Activated T-helper 1 cell treated with anti-CD3 and anti-CD28 coated beads, Interleukin-12 subunit alpha, Interleukin-12 subunit beta, Interleukin-2, Interleukin-4 antibody, amounts not matched to agents 30 ng/mL and 10 ng/mL and 1 ng/mL, durations not matched to agents 14 hours and 24 hours and 36 hours (primary cell): ENCODE measurements at regions of chr19 and their contacts with region 1.

Region 1: DNA sequence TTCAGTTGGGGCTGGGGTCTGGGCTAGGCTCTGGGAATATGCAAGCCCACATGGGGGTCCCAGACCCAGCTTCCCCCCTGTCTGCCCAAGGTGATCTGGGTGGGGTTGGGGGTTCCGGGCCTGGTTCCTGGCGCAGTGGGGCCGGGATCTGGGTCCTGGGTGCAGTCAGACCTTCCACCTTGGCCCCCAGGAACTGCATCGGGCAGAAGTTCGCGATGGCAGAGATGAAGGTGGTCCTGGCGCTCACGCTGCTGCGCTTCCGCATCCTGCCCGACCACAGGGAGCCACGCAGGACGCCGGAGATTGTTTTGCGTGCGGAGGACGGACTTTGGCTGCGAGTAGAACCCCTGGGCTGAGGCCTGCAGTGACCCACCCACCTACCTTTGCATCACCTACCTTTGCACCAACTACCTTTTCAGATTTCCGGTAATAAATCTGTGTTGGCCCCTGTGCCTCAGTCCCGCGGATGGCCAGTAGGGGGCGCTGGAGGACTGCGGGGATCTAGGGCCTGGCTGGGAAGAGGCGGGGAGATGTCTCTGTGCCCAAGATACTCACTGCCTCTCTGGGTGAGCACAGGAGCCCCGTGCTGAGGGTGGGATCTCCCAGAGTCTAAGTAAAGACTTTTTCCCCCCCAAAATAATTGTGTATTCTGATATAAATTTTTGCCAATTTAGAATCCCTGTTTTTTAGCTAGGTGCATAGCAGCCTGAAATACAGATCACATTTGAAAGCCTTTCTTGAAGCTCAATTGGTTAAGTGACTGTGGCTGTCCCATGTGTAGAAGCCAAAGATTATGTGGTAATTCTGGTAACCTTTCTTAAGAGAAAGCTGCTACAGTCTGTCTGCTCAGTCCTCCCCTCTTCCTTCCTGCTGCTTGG is 11.5 kb upstream of the CYP4F3 start:
- DNase-seq: peak; percentile 74
- H3K4me3 Mint-ChIP-seq: no peak overlapping the region
- H3K27ac Mint-ChIP-seq: no peak overlapping the region
- H3K4me1 Mint-ChIP-seq: no peaks in the 10 kb centered on the region
- H3K27me3 Mint-ChIP-seq: peaks cover 7% of the 10 kb centered on the region

Region 2: DNA sequence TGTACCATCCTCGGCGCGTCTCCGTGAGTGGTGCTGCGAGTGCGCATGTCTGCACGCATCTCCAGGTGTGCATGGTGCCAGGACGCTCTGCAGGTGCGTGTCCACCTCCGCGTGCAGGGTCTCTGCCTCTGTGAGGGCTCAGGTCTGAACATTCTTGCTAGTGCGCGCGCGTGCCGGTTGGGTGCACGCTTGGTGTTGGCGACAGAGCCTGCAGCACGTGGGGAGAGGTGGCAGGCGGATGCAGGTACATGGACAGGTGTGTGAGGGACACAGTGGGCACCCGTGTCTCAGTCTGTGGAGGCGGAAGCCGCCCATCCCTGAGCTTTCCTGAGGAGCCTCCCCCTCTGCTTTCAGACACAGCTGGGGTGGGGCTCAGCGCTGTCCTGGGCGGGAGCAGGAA is 93.7 kb after region 1 on chr19:
- intact Hi-C with region 1: no loop called
- DNase-seq: no peak
- H3K4me3 Mint-ChIP-seq: no peak overlapping the region
- H3K27ac Mint-ChIP-seq: no peak overlapping the region
- H3K4me1 Mint-ChIP-seq: no peaks in the 10 kb centered on the region
- H3K27me3 Mint-ChIP-seq: peaks cover 6% of the 10 kb centered on the region

Region 3: GRCh38 chr19:15869109-15869555 is 239.9 kb after region 1 on chr19:
- intact Hi-C with region 1: loop called (anchors 1 kb)
- DNase-seq: no peak
- H3K4me3 Mint-ChIP-seq: no peak overlapping the region
- H3K27ac Mint-ChIP-seq: no peak overlapping the region
- H3K4me1 Mint-ChIP-seq: no peaks in the 10 kb centered on the region
- H3K27me3 Mint-ChIP-seq: peaks cover 3% of the 10 kb centered on the region

Region 4: GRCh38 chr19:16041299-16041990 is 412.2 kb after region 1 on chr19:
- intact Hi-C with region 1: loop called (anchors 1 kb)
- DNase-seq: peak; percentile 64
- H3K4me3 Mint-ChIP-seq: peak overlapping the region; percentile 45
- H3K27ac Mint-ChIP-seq: no peak overlapping the region
- H3K4me1 Mint-ChIP-seq: peaks cover 5% of the 10 kb centered on the region
- H3K27me3 Mint-ChIP-seq: peaks cover 4% of the 10 kb centered on the region

Region 5: GRCh38 chr19:16382775-16383543 is 753.7 kb after region 1 on chr19:
- intact Hi-C with region 1: loop called (anchors 10 kb)
- DNase-seq: peak; percentile 64
- H3K4me3 Mint-ChIP-seq: peak overlapping the region; percentile 62
- H3K27ac Mint-ChIP-seq: no peak overlapping the region
- H3K4me1 Mint-ChIP-seq: peaks cover 40% of the 10 kb centered on the region
- H3K27me3 Mint-ChIP-seq: no peaks in the 10 kb centered on the region